Activated CD4-positive, alpha-beta memory T cell treated with anti-CD3 and anti-CD28 coated beads for 36 hours (primary cell): ENCODE measurements at regions of chr1 and their contacts with region 1.

Region 1: DNA sequence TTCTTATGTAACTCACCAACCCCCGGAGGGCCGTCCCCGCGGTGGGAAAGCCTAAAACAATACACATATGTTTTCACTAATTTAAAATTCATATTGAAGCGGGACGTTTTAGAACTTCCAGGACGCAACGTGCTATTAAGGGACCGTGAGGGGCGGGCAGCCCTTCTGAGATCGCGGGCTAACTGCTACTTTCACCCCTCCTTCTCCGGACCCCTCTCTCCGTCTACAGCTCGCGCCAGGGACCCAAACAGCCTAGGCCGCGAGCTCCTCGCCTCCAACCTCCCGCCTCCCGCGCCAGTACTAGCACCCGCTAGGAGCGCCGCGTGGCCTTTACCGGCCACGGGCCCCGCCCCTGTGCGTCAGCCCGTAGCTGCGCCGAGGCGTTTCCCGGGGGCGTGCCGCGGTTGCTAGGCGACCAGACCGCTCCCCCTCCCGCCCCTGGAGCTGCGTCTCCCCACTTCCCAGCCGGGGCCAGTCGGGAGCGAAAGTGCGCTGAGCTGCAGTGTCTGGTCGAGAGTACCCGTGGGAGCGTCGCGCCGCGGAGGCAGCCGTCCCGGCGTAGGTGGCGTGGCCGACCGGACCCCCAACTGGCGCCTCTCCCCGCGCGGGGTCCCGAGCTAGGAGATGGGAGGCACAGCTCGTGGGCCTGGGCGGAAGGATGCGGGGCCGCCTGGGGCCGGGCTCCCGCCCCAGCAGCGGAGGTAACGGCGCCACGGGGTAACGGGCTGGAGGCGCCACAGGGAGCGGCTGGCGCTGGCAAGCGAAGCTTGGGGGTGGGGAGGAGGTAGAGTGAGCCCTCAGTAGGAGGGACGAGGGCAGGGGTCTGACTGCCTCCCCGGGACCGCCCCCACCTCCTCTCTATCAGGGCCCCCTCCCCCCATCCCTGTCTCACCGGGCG is at the start of gene DYRK3:
- DNase-seq: peak; percentile 96
- H3K4me3 Mint-ChIP-seq: peak within 1 kb of the TSS; percentile 80
- H3K27ac Mint-ChIP-seq: peak within 1 kb of the TSS; percentile 80
- H3K4me1 Mint-ChIP-seq: peaks cover 25% of the 10 kb centered on the region
- H3K27me3 Mint-ChIP-seq: peaks cover 5% of the 10 kb centered on the region
- total RNA-seq, gene DYRK3: 10.1 to 11.4 TPM

Region 2: DNA sequence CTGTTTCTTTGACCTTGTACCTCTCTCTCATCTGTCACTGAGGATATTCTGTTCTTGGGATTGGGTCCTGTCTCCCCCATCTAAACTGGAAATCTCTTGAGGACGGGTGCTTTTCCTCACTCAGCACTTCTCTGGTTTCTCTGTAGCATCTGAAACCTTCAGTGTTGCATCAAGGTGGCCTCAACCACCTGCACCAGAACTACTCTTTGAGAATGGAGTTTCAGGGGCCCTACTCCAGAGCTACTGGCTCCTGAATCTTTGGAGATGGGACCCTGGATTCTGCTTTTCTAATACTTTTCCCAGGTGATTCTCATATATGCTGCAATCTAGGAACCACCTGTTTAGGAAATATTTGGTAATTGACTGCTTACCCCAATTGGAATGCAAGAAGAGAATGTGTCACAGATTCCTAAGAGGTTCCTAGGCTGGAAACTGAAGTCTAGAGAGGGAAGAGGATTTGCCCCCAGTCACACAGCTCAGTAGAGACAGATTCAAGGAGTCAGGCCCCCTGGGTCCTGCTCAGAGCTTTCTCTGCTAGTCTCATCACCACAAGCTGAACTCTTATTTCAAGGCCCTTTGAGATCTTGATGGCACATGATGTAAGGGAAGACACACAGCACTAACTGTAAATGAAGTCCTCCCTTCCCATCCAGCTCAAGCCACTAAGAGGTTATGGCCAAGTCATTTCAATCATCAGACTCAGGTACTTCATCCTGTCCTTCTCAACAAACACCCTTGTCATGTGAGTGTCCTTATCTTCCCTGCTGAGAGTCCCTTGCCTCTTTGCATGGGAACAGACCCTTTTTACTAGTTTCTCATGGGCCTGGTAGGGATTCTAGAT is 71.7 kb before region 1 on chr1:
- CTCF ChIA-PET with region 1: no interaction called
- POLR2A ChIA-PET with region 1: no interaction called
- intact Hi-C with region 1: no loop called
- DNase-seq: no peak
- H3K4me3 Mint-ChIP-seq: peak overlapping the region; percentile 72
- H3K27ac Mint-ChIP-seq: peak overlapping the region; percentile 99
- H3K4me1 Mint-ChIP-seq: peaks cover 86% of the 10 kb centered on the region
- H3K27me3 Mint-ChIP-seq: no peaks in the 10 kb centered on the region

Region 3: DNA sequence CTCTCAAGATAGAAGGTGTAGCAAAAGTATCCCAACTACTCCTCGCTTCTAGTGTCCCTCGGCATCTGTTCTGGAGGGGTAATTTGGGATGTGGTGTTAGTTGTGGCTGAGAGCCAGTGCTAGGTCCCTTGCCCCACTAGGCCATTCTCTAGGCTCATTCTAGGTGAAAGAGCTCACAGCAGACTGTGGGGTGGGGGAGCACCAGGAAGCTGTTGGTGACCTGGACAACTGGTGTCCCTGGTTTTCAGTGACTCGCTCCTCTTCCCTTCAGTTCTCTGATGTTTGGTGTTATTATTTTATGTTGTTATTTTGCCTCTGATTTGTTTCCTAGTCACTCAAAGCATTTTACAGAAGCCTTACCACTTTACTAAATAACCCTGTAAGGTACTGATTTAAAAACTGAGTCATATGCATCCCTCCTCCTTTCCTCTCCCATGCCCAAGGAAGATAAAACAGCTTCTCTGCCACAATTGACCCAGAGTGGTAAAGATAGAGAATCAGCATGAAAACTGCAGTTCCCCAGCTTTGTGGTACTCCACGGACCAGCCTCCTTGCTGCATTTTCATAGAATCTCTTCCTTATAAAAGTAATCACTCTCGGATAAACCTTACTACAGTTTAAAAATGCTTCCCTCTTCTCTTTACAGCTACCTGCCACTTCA is 14.1 kb after region 1 on chr1:
- CTCF ChIA-PET with region 1: interaction called, 399 read pairs
- POLR2A ChIA-PET with region 1: no interaction called
- intact Hi-C with region 1: no loop called
- DNase-seq: no peak
- H3K4me3 Mint-ChIP-seq: no peak overlapping the region
- H3K27ac Mint-ChIP-seq: no peak overlapping the region
- H3K4me1 Mint-ChIP-seq: peaks cover 5% of the 10 kb centered on the region
- H3K27me3 Mint-ChIP-seq: no peaks in the 10 kb centered on the region